CD8-positive, alpha-beta T cell (primary cell): ENCODE measurements at regions of chrX and their contacts with region 1.

Region 1: DNA sequence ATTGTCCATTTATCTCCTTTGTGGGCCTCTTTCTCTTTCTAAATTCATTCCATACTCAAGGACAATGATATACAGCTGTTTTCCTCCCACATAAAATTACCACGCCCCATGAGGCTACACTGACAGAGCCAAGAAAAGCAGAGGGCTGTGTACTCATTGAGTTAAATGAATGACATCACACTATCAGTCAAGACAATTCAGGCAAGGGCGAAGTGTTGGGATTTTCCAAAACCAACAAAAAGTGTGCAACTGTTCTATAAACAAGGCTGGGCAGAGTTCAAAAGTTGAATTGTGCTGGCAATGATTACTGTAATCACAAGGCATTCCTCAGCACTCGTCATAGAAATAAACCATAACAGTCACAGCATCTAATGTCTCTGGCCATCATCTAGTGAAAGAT is 799.6 kb upstream of the DIAPH2 start:
- DNase-seq: no peak
- ATAC-seq: no peak
- H3K4me3 ChIP-seq: no peak overlapping the region
- H3K4me3 Mint-ChIP-seq: no peak overlapping the region
- H3K27ac ChIP-seq: no peak overlapping the region
- H3K27ac Mint-ChIP-seq: no peak overlapping the region
- H3K4me1 ChIP-seq: no peaks in the 10 kb centered on the region
- H3K4me1 Mint-ChIP-seq: no peaks in the 10 kb centered on the region
- H3K27me3 ChIP-seq: no peaks in the 10 kb centered on the region
- H3K27me3 Mint-ChIP-seq: no peaks in the 10 kb centered on the region
- CTCF ChIP-seq: no peak

Region 2: DNA sequence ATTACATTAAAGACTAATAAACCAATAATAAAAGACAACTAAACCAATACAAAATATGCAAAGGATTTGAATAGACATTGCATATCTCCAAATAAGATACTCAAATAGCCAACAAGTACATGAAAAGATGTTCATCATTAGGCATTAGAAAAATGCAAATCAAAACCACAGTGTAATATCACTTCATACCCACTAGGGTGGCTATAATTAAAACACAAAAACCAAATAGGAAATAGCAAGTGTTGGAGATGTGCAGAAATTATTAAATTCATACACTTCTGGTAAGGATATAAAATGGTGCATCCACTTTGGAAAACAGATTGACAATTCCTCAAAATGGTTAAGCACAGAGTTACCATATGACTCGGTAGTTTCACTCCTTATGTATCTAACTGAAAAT is 61.3 kb before region 1 on chrX:
- CTCF ChIA-PET with region 1: no interaction called
- POLR2A ChIA-PET with region 1: no interaction called
- intact Hi-C with region 1: no loop called
- DNase-seq: no peak
- ATAC-seq: no peak
- H3K4me3 ChIP-seq: no peak overlapping the region
- H3K4me3 Mint-ChIP-seq: no peak overlapping the region
- H3K27ac ChIP-seq: no peak overlapping the region
- H3K27ac Mint-ChIP-seq: no peak overlapping the region
- H3K4me1 ChIP-seq: no peaks in the 10 kb centered on the region
- H3K4me1 Mint-ChIP-seq: no peaks in the 10 kb centered on the region
- H3K27me3 ChIP-seq: no peaks in the 10 kb centered on the region
- H3K27me3 Mint-ChIP-seq: no peaks in the 10 kb centered on the region
- CTCF ChIP-seq: no peak

Region 3: DNA sequence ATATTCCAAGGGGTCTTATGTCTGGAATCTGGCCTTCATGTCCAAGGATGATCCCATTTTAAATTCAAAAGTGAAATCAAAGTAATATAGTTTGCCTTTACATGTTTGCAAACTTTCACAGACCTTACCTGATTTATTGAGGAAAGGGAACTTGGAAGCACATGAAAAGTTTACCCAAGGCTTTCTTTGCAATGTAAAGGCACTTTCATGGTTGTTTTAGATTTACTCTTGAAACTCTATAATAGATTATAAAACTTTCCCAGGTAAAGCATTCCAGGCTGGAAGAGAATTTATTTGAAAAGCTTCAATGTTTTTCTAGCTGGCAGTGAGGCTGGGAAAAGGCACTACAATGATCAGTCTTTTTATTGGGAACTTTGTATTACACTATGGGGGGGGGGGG is 43.2 kb before region 1 on chrX:
- CTCF ChIA-PET with region 1: no interaction called
- POLR2A ChIA-PET with region 1: no interaction called
- intact Hi-C with region 1: no loop called
- DNase-seq: no peak
- ATAC-seq: no peak
- H3K4me3 ChIP-seq: no peak overlapping the region
- H3K4me3 Mint-ChIP-seq: no peak overlapping the region
- H3K27ac ChIP-seq: no peak overlapping the region
- H3K27ac Mint-ChIP-seq: no peak overlapping the region
- H3K4me1 ChIP-seq: no peaks in the 10 kb centered on the region
- H3K4me1 Mint-ChIP-seq: no peaks in the 10 kb centered on the region
- H3K27me3 ChIP-seq: no peaks in the 10 kb centered on the region
- H3K27me3 Mint-ChIP-seq: no peaks in the 10 kb centered on the region
- CTCF ChIP-seq: no peak

Region 4: DNA sequence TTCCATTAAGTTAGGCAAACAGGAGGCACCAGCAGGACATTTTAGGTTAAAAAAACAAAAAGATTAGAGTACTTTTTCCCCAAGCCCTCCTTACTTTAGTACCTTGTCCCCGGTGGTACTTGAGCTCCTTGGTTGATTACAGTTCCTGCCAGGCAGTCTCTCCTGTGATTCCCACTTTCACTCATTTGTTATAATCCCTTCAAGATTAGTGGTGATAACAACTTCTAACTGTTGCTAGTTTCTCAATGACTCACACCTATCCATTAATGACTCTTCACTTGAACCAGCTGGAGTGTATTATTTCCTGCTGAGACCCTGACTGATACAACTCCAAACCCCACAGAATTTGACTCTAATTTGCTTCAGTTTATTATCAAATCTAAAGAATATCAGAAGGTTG is 34.5 kb after region 1 on chrX:
- CTCF ChIA-PET with region 1: no interaction called
- POLR2A ChIA-PET with region 1: no interaction called
- intact Hi-C with region 1: loop called in 1 of 2 experiments (anchors 1 kb)
- DNase-seq: no peak
- ATAC-seq: no peak
- H3K4me3 ChIP-seq: no peak overlapping the region
- H3K4me3 Mint-ChIP-seq: no peak overlapping the region
- H3K27ac ChIP-seq: no peak overlapping the region
- H3K27ac Mint-ChIP-seq: no peak overlapping the region
- H3K4me1 ChIP-seq: no peaks in the 10 kb centered on the region
- H3K4me1 Mint-ChIP-seq: no peaks in the 10 kb centered on the region
- H3K27me3 ChIP-seq: no peaks in the 10 kb centered on the region
- H3K27me3 Mint-ChIP-seq: no peaks in the 10 kb centered on the region
- CTCF ChIP-seq: no peak

Region 5: GRCh38 chrX:96094616-96095015 is 209.5 kb after region 1 on chrX:
- CTCF ChIA-PET with region 1: no interaction called
- POLR2A ChIA-PET with region 1: no interaction called
- intact Hi-C with region 1: no loop called
- DNase-seq: no peak
- ATAC-seq: no peak
- H3K4me3 ChIP-seq: no peak overlapping the region
- H3K4me3 Mint-ChIP-seq: no peak overlapping the region
- H3K27ac ChIP-seq: no peak overlapping the region
- H3K27ac Mint-ChIP-seq: no peak overlapping the region
- H3K4me1 ChIP-seq: no peaks in the 10 kb centered on the region
- H3K4me1 Mint-ChIP-seq: no peaks in the 10 kb centered on the region
- H3K27me3 ChIP-seq: no peaks in the 10 kb centered on the region
- H3K27me3 Mint-ChIP-seq: no peaks in the 10 kb centered on the region
- CTCF ChIP-seq: no peak